Activated naive CD4-positive, alpha-beta T cell treated with anti-CD3 and anti-CD28 coated beads for 36 hours (primary cell): ENCODE measurements at regions of chr2 and their contacts with region 1.

Region 1: DNA sequence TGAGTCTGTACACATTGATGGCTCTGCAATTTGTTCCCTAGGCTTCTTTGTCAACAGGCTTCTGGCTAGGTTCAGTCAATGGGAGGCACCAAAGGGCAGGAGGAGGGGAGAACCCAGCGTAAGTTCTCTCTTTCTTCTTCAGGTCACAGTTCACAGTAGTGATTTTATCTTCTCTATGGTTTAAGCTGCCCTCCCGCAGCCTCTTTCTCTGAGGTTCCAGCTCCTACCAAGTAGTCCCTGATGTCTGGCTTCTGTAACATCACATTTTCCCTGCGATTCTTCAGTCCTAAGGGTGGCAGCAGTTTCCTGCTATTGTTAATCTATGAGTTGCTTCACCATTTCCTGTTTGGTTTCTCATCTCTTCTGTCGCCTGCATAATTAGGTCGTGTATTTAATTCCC is 107.4 kb downstream of the CPO start:
- DNase-seq: peak; percentile 59
- H3K4me3 Mint-ChIP-seq: no peak overlapping the region
- H3K27ac Mint-ChIP-seq: peak overlapping the region; percentile 62
- H3K4me1 Mint-ChIP-seq: peaks cover 10% of the 10 kb centered on the region
- H3K27me3 Mint-ChIP-seq: no peaks in the 10 kb centered on the region

Region 2: GRCh38 chr2:206800506-206801417 is 246.0 kb before region 1 on chr2:
- CTCF ChIA-PET with region 1: interaction called, 6 read pairs
- intact Hi-C with region 1: loop called (anchors 1 kb)
- DNase-seq: peak; percentile 70
- H3K4me3 Mint-ChIP-seq: no peak overlapping the region
- H3K27ac Mint-ChIP-seq: no peak overlapping the region
- H3K4me1 Mint-ChIP-seq: peaks cover 31% of the 10 kb centered on the region
- H3K27me3 Mint-ChIP-seq: no peaks in the 10 kb centered on the region

Region 3: GRCh38 chr2:207133820-207134519 is 87.2 kb after region 1 on chr2:
- CTCF ChIA-PET with region 1: interaction called, 3 read pairs
- intact Hi-C with region 1: loop called (anchors 2 kb)
- DNase-seq: no peak
- H3K4me3 Mint-ChIP-seq: peak overlapping the region; percentile 7
- H3K27ac Mint-ChIP-seq: peak overlapping the region; percentile 30
- H3K4me1 Mint-ChIP-seq: peaks cover 91% of the 10 kb centered on the region
- H3K27me3 Mint-ChIP-seq: no peaks in the 10 kb centered on the region

Region 4: GRCh38 chr2:207238831-207239701 is 192.3 kb after region 1 on chr2:
- CTCF ChIA-PET with region 1: interaction called, 3 read pairs
- intact Hi-C with region 1: loop called (anchors 5 kb)
- DNase-seq: peak; percentile 73
- H3K4me3 Mint-ChIP-seq: no peak overlapping the region
- H3K27ac Mint-ChIP-seq: peak overlapping the region; percentile 2
- H3K4me1 Mint-ChIP-seq: peaks cover 30% of the 10 kb centered on the region
- H3K27me3 Mint-ChIP-seq: no peaks in the 10 kb centered on the region

Region 5: GRCh38 chr2:207334624-207335371 is 288.1 kb after region 1 on chr2:
- CTCF ChIA-PET with region 1: no interaction called
- intact Hi-C with region 1: loop called (anchors 5 kb)
- DNase-seq: peak; percentile 63
- H3K4me3 Mint-ChIP-seq: no peak overlapping the region
- H3K27ac Mint-ChIP-seq: peak overlapping the region; percentile 84
- H3K4me1 Mint-ChIP-seq: peaks cover 71% of the 10 kb centered on the region
- H3K27me3 Mint-ChIP-seq: no peaks in the 10 kb centered on the region

Region 6: GRCh38 chr2:208040199-208041171 is 993.8 kb after region 1 on chr2:
- CTCF ChIA-PET with region 1: no interaction called
- intact Hi-C with region 1: loop called (anchors 10 kb)
- DNase-seq: peak; percentile 93
- H3K4me3 Mint-ChIP-seq: no peak overlapping the region
- H3K27ac Mint-ChIP-seq: no peak overlapping the region
- H3K4me1 Mint-ChIP-seq: peaks cover 3% of the 10 kb centered on the region
- H3K27me3 Mint-ChIP-seq: peaks cover 2% of the 10 kb centered on the region